ENCODE measurements at regions of chr11 and their contacts with region 1.

Region 1: DNA sequence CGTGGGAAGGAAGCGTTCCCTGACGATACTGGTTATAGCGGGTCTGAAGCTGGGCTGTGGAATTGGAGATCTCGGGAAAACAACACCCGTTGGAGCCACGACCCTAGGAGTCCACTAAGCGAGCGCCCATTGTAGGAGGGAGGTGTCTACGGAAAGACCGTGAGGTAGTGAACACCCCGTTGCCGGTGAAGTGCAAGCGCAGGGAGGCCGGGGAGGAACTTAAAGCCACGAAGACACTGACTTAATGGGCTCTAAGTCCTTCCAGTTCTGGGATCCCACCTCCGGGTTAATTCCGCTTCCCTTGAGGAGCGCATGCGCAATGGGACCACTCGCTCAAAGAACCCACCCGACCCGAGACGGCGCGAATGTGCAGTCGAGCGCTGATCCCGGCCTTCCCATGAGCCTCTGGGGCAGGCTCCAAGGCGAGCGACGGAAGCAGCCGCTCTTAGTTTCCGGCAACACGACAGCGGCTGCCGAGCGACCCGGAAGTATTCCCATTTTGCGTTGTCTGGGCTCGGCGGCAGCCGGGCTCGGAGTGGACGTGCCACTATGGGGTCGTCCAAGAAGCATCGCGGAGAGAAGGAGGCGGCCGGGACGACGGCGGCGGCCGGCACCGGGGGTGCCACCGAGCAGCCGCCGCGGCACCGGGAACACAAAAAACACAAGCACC is at the start of gene SART1:
- DNase-seq: peak; percentile 81 to 97 (median 94)
- ATAC-seq: peak; percentile 96
- H3K4me3 ChIP-seq: peak within 1 kb of the TSS; percentile 83
- H3K4me3 Mint-ChIP-seq: peak within 1 kb of the TSS; percentile 93 to 99 (median 98)
- H3K27ac ChIP-seq: peak within 1 kb of the TSS; percentile 96
- H3K27ac Mint-ChIP-seq: peak within 1 kb of the TSS; percentile 96 to 99 (median 98)
- H3K4me1 ChIP-seq: peaks cover 27 to 38% of the 10 kb centered on the region in 2 donors
- H3K4me1 Mint-ChIP-seq: peaks cover 23 to 64% (median 54%) of the 10 kb centered on the region in 7 donors
- H3K27me3 ChIP-seq: no peaks in the 10 kb centered on the region
- H3K27me3 Mint-ChIP-seq: no peaks in the 10 kb centered on the region
- total RNA-seq, gene SART1: 65.9 to 102 (median 90.8) TPM

Region 2: DNA sequence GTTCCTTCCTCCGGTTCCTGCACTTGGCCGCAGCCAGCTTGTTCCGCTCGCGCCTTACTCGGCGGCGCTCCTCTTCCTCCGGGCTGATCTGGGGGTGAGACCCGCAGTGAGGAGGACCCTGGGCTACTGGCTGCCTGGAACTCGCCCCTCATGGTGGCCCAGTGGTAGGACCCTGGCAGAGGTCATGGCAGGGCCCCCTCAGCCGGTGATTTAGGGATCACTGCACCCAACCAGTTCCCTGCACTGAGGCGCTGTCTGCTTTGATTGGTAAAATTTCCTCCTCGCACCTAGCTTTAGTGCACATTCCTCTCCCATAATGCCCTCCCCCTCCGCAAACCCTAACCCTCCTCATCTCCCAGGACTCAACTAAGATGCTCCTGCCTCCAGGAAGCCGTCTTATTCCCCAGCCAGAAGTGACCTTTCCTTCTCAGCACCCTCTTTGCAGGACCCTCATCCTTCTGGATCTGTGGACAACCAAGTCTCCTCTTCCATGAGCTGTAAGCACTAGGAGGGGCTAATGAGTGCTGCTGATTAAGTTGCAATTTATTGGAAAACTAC is 67.3 kb before region 1 on chr11:
- CTCF ChIA-PET with region 1: interaction called, 20 read pairs
- POLR2A ChIA-PET with region 1: interaction called, 108 read pairs
- intact Hi-C with region 1: no loop called
- DNase-seq: peak in 1 of 9 donors; percentile 19
- ATAC-seq: no peak
- H3K4me3 ChIP-seq: peak overlapping the region; percentile 67
- H3K4me3 Mint-ChIP-seq: peak overlapping the region; percentile 75 to 97 (median 85)
- H3K27ac ChIP-seq: peak overlapping the region; percentile 92
- H3K27ac Mint-ChIP-seq: peak overlapping the region; percentile 44 to 91 (median 85)
- H3K4me1 ChIP-seq: peaks cover 37 to 44% of the 10 kb centered on the region in 2 donors
- H3K4me1 Mint-ChIP-seq: peaks cover 30 to 70% (median 45%) of the 10 kb centered on the region in 7 donors
- H3K27me3 ChIP-seq: no peaks in the 10 kb centered on the region
- H3K27me3 Mint-ChIP-seq: peaks cover 0 to 3% (median 0%) of the 10 kb centered on the region in 5 donors

Region 3: DNA sequence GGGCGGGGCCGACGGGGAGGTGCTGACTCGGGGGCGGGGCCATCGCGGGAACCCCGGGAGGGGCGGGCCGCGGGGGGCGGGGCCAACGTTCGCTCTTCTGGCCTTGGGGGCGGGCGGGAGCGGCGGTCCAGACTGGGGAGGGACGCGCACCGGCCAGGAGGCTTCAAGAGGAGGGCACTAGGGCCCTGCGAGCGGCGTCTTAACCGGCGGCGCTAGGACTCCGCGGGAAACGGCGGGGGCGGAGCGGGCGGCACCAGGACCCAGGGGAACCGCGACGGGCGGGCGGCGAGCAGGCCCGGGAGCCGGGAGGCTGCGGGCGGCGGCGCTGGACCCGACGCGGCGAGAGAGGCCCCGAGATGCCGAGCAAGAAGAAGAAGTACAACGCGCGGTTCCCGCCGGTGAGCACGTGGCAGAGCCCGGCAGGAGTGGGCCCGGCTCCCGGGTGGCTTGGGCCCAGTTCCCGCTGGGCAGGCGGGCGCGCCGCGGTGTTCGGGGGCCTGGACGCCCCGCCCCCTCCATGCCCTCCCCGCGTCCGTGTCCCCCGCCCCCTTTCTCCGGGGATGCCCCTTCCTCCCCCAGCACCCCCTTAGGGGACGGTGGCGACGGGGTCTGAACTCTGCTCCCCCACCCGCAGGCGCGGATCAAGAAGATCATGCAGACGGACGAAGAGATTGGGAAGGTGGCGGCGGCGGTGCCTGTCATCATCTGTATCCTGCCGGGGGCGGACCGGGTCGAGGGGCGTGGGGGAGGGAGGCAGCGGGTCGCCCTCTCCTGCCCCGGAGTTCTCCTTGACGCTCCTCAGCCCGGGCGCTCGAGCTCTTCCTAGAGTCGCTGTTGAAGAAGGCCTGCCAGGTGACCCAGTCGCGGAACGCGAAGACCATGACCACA is 42.0 kb before region 1 on chr11 and contains the start of gene DRAP1:
- CTCF ChIA-PET with region 1: no interaction called
- POLR2A ChIA-PET with region 1: interaction called, 16 read pairs
- intact Hi-C with region 1: loop called (anchors 1 kb)
- DNase-seq: peak; percentile 95 to 98 (median 97)
- ATAC-seq: peak; percentile 93
- H3K4me3 ChIP-seq: peak within 1 kb of the TSS; percentile 83
- H3K4me3 Mint-ChIP-seq: peak within 1 kb of the TSS; percentile 86 to 96 (median 93)
- H3K27ac ChIP-seq: peak within 1 kb of the TSS; percentile 95
- H3K27ac Mint-ChIP-seq: peak within 1 kb of the TSS; percentile 79 to 96 (median 90)
- H3K4me1 ChIP-seq: peaks cover 26 to 28% of the 10 kb centered on the region in 2 donors
- H3K4me1 Mint-ChIP-seq: peaks cover 32 to 61% (median 36%) of the 10 kb centered on the region in 7 donors
- H3K27me3 ChIP-seq: no peaks in the 10 kb centered on the region
- H3K27me3 Mint-ChIP-seq: no peaks in the 10 kb centered on the region
- total RNA-seq, gene DRAP1: 72.6 to 166 (median 81.9) TPM

Region 4: GRCh38 chr11:65927904-65928397 is 33.4 kb before region 1 on chr11:
- CTCF ChIA-PET with region 1: no interaction called
- POLR2A ChIA-PET with region 1: interaction called, 25 read pairs
- intact Hi-C with region 1: loop called (anchors 1 kb)
- DNase-seq: peak in 8 of 9 donors; percentile 64 to 86 (median 80)
- ATAC-seq: peak; percentile 96
- H3K4me3 ChIP-seq: peak overlapping the region; percentile 78
- H3K4me3 Mint-ChIP-seq: peak overlapping the region; percentile 74 to 89 (median 81)
- H3K27ac ChIP-seq: peak overlapping the region; percentile 81
- H3K27ac Mint-ChIP-seq: peak overlapping the region; percentile 92 to 98 (median 96)
- H3K4me1 ChIP-seq: peaks cover 20 to 30% of the 10 kb centered on the region in 2 donors
- H3K4me1 Mint-ChIP-seq: peaks cover 31 to 47% (median 36%) of the 10 kb centered on the region in 7 donors
- H3K27me3 ChIP-seq: no peaks in the 10 kb centered on the region
- H3K27me3 Mint-ChIP-seq: no peaks in the 10 kb centered on the region

Region 5: DNA sequence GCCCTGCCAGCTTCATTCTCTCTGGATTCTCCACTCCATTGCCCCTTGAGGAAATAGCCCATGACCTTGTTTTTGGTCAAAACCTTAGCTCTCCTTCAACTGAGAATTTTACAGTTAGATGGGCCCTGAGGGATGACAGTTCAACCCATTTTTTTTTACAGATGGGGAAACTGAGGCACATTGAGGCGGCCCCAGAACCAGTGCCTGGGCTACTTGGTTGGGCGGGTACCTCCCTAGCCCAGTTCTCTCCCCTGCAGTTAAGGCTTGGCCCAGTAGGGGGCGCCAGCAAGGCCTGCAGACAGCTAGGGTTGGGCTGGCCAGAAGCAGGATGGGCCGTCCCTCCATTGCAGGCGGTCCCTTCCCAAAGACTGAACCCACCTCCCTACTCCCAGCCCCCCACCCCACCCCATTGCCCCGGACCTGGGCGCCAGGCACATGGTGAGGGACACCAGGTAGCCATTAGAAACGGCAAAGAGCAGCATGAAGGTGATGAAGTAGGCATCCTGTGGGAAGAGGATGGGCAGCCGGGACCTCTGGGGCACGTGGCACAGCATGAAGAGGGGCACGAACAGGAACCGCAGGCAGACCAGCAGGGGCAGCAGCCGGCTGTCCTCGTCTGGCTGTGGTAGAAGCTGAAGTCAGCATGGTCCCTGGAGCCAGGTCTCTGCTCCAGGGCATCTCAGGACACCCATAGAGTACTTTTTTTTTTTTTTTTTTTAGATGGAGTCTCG is 402.6 kb after region 1 on chr11:
- CTCF ChIA-PET with region 1: no interaction called
- POLR2A ChIA-PET with region 1: no interaction called
- intact Hi-C with region 1: no loop called
- DNase-seq: peak; percentile 24 to 81 (median 57)
- ATAC-seq: peak; percentile 75
- H3K4me3 ChIP-seq: no peak overlapping the region
- H3K4me3 Mint-ChIP-seq: no peak overlapping the region
- H3K27ac ChIP-seq: no peak overlapping the region
- H3K27ac Mint-ChIP-seq: peak overlapping the region in 1 of 9 donors; percentile 47
- H3K4me1 ChIP-seq: no peaks in the 10 kb centered on the region
- H3K4me1 Mint-ChIP-seq: peaks cover 0 to 3% (median 0%) of the 10 kb centered on the region in 7 donors
- H3K27me3 ChIP-seq: no peaks in the 10 kb centered on the region
- H3K27me3 Mint-ChIP-seq: no peaks in the 10 kb centered on the region